Panc1 (cell line): ENCODE measurements at regions of chr18 and their contacts with region 1.

Region 1: DNA sequence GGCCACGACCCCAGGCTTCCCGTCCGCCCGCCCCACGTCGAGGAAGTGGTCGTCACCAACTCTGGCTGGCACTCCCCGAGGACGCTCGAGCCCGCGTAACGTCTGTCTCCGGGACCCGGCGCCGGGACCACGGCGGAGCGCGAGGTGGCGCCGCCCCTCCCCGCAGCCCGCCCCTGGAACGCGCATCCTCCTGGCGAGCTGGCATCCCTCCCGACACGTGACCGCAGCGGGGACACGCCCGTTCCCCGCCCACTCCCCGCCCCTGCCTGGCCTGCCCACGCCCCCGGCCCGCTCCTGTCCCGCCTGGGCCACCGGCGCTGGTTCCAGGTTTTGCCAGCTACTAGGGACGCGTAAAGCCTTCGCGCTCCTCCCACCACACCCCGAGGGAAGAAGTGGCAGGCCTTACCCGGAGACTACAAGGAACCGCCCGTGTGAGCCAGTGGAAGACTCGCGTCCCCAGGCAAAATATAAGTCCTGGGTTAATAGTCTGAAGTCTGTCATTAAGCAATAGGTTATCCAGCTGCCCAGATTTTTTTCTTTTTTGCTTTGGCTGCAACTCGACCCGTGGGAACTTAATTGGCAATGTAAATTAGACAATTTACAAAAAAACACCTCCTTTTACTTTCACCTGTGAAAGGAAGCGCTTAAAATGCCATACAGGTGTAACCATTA is at the start of gene OSBPL1A:
- DNase-seq: peak; percentile 39
- ATAC-seq: peak; percentile 97
- H3K4me3 ChIP-seq: peak within 1 kb of the TSS; percentile 74 to 79
- H3K27ac ChIP-seq: peak within 1 kb of the TSS; percentile 87
- H3K4me1 ChIP-seq: peaks cover 15% of the 10 kb centered on the region
- H3K27me3 ChIP-seq: no peaks in the 10 kb centered on the region
- CTCF ChIP-seq: no peak
- total RNA-seq, gene OSBPL1A: 50.5 TPM

Region 2: DNA sequence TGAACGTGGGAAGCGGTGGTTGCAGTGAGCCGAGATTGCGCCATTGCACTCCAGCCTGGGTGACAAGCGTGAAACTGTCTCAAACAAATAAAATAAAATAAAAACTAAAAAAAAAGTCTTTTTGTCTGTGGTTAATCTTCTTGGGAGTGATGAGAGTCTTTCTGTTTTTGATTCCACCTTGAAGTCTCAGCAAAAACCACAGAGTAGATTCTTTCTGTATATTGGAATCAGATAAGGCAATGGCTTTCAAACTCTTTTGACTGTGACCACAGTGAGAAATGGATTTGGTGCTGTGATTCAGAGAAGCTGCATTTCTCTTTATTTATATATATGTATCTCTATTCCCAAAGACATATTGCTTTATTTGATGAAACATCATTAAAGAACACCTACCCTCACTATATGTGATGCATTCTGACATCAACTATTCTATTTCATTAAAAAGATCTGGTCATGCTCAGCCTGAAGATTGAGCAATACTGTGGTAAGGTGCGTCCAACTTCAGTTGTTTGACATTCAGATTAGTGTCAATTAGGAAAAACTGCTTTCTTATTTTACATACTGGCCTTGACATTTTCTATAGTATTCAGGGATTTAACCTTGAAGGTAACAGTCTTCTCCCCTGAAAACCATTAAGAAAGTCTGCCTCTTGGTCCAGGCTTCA is 78.2 kb after region 1 on chr18:
- CTCF ChIA-PET with region 1: no interaction called
- POLR2A ChIA-PET with region 1: no interaction called
- in situ Hi-C with region 1: no loop called
- intact Hi-C with region 1: no loop called
- DNase-seq: no peak
- ATAC-seq: no peak
- H3K4me3 ChIP-seq: no peak overlapping the region
- H3K27ac ChIP-seq: no peak overlapping the region
- H3K4me1 ChIP-seq: no peaks in the 10 kb centered on the region
- H3K27me3 ChIP-seq: no peaks in the 10 kb centered on the region
- CTCF ChIP-seq: no peak

Region 3: DNA sequence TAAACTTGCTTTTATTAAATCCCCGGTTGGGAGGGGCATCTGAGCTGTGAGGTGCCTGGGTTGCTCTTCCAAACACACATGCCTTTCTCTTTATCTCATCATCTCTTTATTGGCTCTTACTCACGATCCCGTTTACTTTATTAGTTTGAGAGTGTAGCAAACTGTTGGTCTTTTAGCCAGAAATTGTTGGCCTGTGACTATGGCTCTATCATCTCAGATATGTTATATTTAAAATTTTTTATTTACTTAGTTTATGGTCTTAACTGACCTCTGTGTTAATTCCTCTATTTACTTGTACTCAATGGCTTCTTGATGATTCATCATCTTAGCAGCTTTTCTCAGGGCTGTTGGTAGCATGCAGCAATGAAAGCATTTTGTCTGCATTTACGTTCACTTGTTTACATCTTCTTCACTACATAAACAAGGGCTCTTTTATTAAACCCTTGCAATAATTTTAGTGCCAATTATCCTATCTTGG is 471.0 kb after region 1 on chr18:
- CTCF ChIA-PET with region 1: no interaction called
- POLR2A ChIA-PET with region 1: interaction called, 11 read pairs
- in situ Hi-C with region 1: no loop called
- intact Hi-C with region 1: no loop called
- DNase-seq: peak; percentile 62
- ATAC-seq: peak; percentile 96
- H3K4me3 ChIP-seq: no peak overlapping the region
- H3K27ac ChIP-seq: no peak overlapping the region
- H3K4me1 ChIP-seq: peaks cover 13% of the 10 kb centered on the region; the same call in 1 of the 2 replicates
- H3K27me3 ChIP-seq: no peaks in the 10 kb centered on the region
- CTCF ChIP-seq: no peak

Region 4: GRCh38 chr18:26258711-26259110 is 1860.9 kb after region 1 on chr18:
- CTCF ChIA-PET with region 1: no interaction called
- POLR2A ChIA-PET with region 1: interaction called, 13 read pairs
- in situ Hi-C with region 1: no loop called
- intact Hi-C with region 1: no loop called
- DNase-seq: no peak
- ATAC-seq: no peak
- H3K4me3 ChIP-seq: no peak overlapping the region
- H3K27ac ChIP-seq: no peak overlapping the region
- H3K4me1 ChIP-seq: no peaks in the 10 kb centered on the region; the same call in 1 of the 2 replicates
- H3K27me3 ChIP-seq: no peaks in the 10 kb centered on the region
- CTCF ChIP-seq: no peak